ENCODE measurements at regions of chr17 and their contacts with region 1.

Region 1: DNA sequence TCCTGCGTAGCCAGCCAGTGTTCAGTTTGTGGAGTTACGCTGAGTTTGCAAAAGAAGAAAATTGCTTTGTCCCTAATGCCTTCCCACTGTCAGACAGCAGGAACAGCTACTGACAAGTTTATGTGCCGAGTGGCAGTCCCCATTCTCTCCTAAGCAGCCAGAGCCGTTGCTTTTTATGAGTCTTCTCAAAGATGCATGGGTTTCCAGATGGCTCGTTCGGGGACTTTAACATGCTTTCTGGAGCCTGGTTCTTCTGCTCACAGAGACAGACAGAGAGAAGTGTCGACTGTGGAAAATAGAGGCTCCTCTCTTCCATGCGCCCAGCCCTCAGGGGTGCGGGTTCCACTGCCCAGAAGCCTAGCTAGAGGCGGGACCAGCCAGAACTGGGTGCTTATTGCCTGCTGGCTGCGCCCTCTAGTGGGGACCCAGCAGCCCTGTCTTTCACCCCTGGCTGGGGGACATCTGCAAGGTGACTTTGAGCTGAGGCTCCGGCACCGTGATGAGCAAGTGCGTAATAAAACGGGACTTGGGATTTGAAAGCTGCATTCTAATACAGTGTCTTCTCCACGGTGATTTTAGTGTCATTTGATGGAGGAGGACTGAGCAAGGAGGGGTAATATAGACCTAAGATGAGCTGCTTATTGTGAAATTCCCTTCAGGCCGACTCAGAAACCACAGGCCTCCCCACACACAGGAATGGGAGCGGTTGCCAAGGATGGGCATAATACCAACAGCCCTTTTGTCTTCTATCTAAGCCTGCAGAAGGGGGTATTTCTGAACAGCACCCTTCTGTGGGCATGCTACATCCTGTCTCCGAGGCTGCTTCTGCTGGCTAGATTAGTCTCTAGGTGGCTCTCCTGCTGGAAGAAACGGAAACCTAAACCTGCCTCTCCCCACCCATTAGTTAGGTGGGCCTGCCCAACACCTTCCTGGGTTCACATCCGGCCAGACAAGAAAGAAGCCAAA is 73.1 kb downstream of the CCDC182 start:
- DNase-seq: peak; percentile 34
- H3K4me3 ChIP-seq: no peak overlapping the region
- H3K27ac ChIP-seq: no peak overlapping the region
- H3K27me3 ChIP-seq: no peaks in the 10 kb centered on the region
- CTCF ChIP-seq: peak; percentile 98

Region 2: DNA sequence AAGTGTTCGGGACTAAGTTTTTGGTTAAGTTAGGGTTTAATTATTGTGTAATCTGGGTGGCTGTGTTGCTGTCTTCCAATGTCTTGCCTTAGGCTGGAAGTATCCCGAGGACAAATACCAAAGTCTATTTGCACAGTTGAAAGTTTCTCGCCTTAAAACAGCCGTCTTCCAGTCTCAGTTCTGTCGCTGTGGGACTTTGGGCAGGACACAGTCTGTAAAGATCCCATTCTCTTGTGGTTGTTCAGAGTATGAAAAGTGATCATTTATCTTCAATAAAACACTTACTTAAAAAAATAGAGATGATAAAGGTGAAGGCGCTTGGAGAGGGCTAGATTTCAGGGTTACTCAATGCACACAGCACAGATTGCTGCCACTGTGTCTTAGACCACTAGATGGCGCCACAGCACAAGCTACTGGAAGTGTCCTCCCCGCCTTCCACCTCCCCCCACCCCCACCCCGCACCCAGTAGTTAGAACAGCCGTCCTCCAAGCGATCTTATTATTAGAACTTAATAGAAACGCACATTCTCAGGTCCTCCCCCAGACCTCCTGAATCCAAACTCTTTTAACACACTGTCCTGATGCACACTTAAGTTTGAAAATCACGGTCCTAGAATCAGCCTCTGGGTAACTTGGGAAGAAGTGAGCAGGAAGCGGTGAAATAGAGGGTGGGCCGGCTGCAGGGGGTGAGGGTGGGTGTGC is 541.0 kb before region 1 on chr17:
- CTCF ChIA-PET with region 1: interaction called, 15 read pairs
- POLR2A ChIA-PET with region 1: no interaction called
- DNase-seq: peak; percentile 46
- H3K4me3 ChIP-seq: peak overlapping the region; percentile 43
- H3K27ac ChIP-seq: no peak overlapping the region
- H3K27me3 ChIP-seq: peaks cover 8% of the 10 kb centered on the region
- CTCF ChIP-seq: peak; percentile 82

Region 3: GRCh38 chr17:57552114-57552624 is 119.8 kb before region 1 on chr17:
- CTCF ChIA-PET with region 1: interaction called, 22 read pairs
- POLR2A ChIA-PET with region 1: no interaction called
- DNase-seq: no peak
- H3K4me3 ChIP-seq: no peak overlapping the region
- H3K27ac ChIP-seq: no peak overlapping the region
- H3K27me3 ChIP-seq: no peaks in the 10 kb centered on the region
- CTCF ChIP-seq: peak; percentile 63

Region 4: DNA sequence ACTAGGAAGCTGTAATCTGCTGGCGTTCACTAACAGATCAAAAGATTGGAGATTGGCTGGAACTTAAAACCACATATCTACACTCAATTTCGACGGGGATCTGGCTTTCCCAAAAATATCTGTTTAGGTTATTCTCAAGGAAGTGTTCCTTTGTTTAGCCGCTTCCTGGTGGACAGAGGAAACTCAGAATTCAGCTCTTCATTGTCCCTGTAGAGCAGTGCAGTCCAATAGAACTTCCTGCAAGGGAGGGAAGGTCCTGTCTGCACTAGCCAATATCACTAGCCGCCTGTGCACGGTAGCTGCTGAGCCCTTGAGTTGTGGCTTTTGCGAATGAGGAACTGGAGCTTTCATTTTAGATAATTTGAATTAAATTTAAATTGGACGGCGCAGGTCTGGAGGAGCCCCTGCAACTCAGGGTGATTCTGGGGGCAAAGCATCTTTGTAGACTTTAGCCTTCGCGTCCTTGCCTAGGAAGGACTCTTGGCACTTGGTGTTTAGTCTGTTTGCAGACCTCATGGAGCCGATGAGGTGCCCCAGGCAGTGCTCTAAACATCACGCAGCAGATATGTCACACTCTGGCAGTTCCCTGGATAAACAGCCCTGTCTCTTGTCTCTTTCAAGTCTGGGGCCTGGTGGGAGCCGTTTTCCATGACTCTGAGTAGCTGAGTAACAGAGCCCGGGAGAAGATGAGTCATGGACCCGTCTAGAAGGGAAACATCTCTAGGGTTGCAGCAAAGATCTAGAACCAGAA is 49.1 kb before region 1 on chr17:
- CTCF ChIA-PET with region 1: interaction called, 19 read pairs
- POLR2A ChIA-PET with region 1: no interaction called
- DNase-seq: no peak
- H3K4me3 ChIP-seq: no peak overlapping the region
- H3K27ac ChIP-seq: peak overlapping the region; percentile 52
- H3K27me3 ChIP-seq: no peaks in the 10 kb centered on the region
- CTCF ChIP-seq: no peak

Region 5: GRCh38 chr17:57685505-57686132 is 13.7 kb after region 1 on chr17:
- CTCF ChIA-PET with region 1: interaction called, 29 read pairs
- POLR2A ChIA-PET with region 1: no interaction called
- DNase-seq: no peak
- H3K4me3 ChIP-seq: no peak overlapping the region
- H3K27ac ChIP-seq: no peak overlapping the region
- H3K27me3 ChIP-seq: no peaks in the 10 kb centered on the region
- CTCF ChIP-seq: no peak

Measured in AG04450 (cell line).